PC-9 (cell line): ENCODE measurements at regions of chr10 and their contacts with region 1.

Region 1: GRCh38 chr10:79532-80215 is 30.6 kb upstream of the TUBB8 start:
- DNase-seq: no peak
- H3K4me3 ChIP-seq: no peak overlapping the region
- H3K27ac ChIP-seq: no peak overlapping the region
- H3K4me1 ChIP-seq: no peaks in the 10 kb centered on the region
- H3K27me3 ChIP-seq: no peaks in the 10 kb centered on the region
- CTCF ChIP-seq: no peak

Region 2: GRCh38 chr10:95356-96125 is 15.9 kb after region 1 on chr10:
- CTCF ChIA-PET with region 1: interaction called, 3 read pairs
- POLR2A ChIA-PET with region 1: interaction called, 27 read pairs
- intact Hi-C with region 1: no loop called
- DNase-seq: no peak
- H3K4me3 ChIP-seq: no peak overlapping the region
- H3K27ac ChIP-seq: no peak overlapping the region
- H3K4me1 ChIP-seq: peaks cover 19% of the 10 kb centered on the region
- H3K27me3 ChIP-seq: no peaks in the 10 kb centered on the region
- CTCF ChIP-seq: no peak

Region 3: DNA sequence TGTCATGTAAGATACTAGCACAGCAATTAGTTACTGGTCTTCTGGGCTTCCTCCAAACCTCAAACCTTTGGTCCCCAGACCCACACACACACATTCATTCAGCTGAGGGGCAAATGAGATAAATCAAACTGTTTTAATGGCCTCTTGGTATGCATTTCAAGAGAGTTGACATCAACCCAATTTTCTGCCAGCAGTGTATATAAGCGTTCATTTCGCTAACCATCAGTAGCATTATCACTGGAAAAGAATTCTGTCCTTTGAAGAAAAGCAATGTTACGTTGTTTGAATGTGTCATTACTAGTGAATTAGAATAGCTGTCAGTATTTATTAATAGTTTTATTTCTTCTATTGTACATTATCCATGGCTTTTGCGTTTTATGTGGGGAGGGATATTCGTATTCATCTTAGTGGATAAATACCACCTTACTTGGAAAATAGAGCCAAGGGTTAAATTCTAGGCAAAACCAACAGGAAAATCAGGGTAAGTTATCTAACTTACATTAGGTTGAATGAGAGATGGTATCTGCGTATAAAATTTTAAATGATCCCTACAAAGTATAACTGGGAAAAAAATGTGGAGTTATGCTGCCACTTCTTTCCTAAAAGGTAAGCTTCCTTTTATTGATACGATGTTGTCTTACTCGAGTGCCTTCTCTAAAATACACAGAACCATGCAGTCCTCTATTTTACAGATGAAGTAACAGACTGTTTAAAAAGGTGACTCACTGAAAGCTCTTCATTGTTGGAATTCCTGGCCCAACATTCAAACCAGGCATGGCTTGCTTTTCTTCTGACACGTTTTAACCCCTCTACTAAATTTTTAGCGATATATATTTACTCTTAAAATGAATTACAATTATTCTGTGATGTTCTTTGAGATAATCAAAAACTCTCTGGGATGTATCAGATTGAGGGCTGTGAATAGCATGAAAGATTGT is 53.6 kb after region 1 on chr10:
- CTCF ChIA-PET with region 1: interaction called, 3 read pairs
- POLR2A ChIA-PET with region 1: no interaction called
- intact Hi-C with region 1: loop called (anchors 2 kb)
- DNase-seq: peak in 1 of 2 experiments; percentile 81
- H3K4me3 ChIP-seq: peak overlapping the region; percentile 77; the same call in 1 of the 2 replicates
- H3K27ac ChIP-seq: peak overlapping the region; percentile 28; the same call in 1 of the 2 replicates
- H3K4me1 ChIP-seq: peaks cover 28% of the 10 kb centered on the region
- H3K27me3 ChIP-seq: no peaks in the 10 kb centered on the region
- CTCF ChIP-seq: no peak

Region 4: GRCh38 chr10:557792-558328 is 478.2 kb after region 1 on chr10:
- CTCF ChIA-PET with region 1: no interaction called
- POLR2A ChIA-PET with region 1: no interaction called
- intact Hi-C with region 1: no loop called
- DNase-seq: no peak
- H3K4me3 ChIP-seq: no peak overlapping the region
- H3K27ac ChIP-seq: no peak overlapping the region
- H3K4me1 ChIP-seq: no peaks in the 10 kb centered on the region
- H3K27me3 ChIP-seq: peaks cover 40% of the 10 kb centered on the region
- CTCF ChIP-seq: no peak